ENCODE measurements at regions of chr1 and their contacts with region 1.

Region 1: DNA sequence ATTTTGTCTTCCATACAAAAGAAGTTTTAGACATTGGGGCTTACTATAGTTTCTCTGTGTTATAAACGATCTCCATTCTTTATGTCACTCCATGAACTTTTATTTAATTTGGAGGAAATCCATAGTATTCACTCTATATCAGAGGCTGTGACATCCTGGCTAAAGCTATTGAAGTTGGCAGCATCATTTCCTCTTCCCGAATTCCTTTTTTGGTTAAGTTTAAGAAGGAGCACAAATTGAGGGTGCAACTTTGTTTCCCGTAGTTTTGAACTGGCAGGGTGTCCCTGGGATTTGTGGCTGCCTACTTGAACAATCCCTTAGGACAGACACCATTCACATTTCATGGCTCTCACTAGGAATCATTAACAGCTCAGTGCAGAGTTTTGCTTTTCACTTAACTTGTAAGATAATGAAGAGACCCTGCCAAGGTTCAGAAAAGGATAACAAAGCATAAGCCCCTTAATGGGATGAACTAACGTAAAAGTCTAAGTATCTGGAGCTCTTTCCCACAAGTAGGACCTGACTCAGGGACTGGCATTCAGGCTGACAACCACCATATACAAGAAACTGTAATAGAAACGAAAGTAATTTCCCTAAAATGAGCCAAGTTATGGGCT is 13.9 kb downstream of the S1PR1 start:
- DNase-seq: no peak

Region 2: GRCh38 chr1:101238681-101239094 is 12.1 kb before region 1 on chr1:
- CTCF ChIA-PET with region 1: interaction called, 18 read pairs
- POLR2A ChIA-PET with region 1: interaction called, 6 read pairs
- DNase-seq: peak; percentile 87

Region 3: DNA sequence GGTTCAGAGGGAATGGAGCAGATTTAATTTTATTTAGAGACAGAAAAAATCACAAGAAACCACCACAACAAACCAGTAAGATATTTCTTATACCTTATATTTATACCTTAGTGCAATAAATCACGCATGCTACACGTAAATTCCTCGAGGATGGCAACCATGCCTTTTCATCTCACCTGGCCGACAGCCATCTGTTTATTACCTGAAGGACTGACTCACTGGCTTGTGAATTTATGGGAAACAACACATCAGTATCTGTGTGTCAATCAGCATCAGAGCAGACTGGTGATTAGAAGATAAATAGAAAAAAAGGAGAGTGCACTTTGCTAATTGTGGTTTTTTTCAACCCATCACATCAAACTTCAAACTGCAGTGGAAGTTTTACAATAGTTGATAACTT is 44.4 kb after region 1 on chr1:
- CTCF ChIA-PET with region 1: no interaction called
- POLR2A ChIA-PET with region 1: no interaction called
- DNase-seq: no peak

Measured in HEK293T (cell line).